Activated CD8-positive, alpha-beta T cell treated with anti-CD3 and anti-CD28 coated beads for 36 hours (primary cell): ENCODE measurements at regions of chr12 and their contacts with region 1.

Region 1: DNA sequence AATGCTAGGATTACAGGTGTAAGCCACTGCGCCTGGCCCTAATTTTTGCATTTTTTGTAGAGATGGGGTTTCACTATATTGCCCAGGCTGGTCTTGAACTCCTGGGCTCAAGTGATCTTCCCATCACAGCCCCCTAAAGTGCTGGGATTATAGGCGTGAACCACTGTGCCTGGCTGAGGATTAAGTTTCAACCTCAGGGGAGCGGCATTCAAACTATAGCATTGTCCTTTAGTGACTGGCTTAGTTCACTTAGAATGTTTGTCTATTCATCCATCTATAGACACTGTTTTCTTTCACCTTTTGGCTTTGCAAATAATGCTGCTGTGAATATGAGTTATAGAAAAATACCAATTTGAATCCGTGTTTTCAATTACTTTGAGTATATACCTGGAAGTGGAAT is 25.2 kb downstream of the PTPN11 start:
- DNase-seq: no peak
- ATAC-seq: no peak
- H3K4me3 Mint-ChIP-seq: no peak overlapping the region
- H3K27ac Mint-ChIP-seq: no peak overlapping the region
- H3K4me1 Mint-ChIP-seq: peaks cover 11% of the 10 kb centered on the region
- H3K27me3 Mint-ChIP-seq: no peaks in the 10 kb centered on the region
- CTCF ChIP-seq: no peak

Region 2: DNA sequence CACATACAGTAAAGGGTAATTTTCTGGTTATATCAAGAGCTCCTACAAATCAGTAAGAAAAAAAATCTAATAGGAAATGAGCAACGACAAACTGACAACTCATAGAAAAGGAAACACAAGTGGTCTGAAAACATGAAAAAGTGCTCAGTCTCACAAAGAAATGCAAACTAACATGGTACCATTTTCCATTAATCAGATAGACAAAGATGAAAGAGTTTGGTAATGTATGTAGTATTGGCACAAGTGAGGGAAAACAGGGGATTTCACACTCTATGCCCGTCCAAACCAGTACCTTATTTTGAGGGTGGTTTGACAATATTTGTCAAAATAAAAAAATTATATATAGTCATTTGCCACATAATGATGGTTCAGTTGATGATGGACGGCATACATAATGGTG is 12.0 kb before region 1 on chr12:
- CTCF ChIA-PET with region 1: interaction called, 3 read pairs
- POLR2A ChIA-PET with region 1: no interaction called
- intact Hi-C with region 1: loop called (anchors 1 kb)
- DNase-seq: no peak
- ATAC-seq: no peak
- H3K4me3 Mint-ChIP-seq: no peak overlapping the region
- H3K27ac Mint-ChIP-seq: peak overlapping the region; percentile 82
- H3K4me1 Mint-ChIP-seq: peaks cover 36% of the 10 kb centered on the region
- H3K27me3 Mint-ChIP-seq: no peaks in the 10 kb centered on the region
- CTCF ChIP-seq: no peak